PC-9 (cell line): ENCODE measurements at regions of chr4 and their contacts with region 1.

Region 1: DNA sequence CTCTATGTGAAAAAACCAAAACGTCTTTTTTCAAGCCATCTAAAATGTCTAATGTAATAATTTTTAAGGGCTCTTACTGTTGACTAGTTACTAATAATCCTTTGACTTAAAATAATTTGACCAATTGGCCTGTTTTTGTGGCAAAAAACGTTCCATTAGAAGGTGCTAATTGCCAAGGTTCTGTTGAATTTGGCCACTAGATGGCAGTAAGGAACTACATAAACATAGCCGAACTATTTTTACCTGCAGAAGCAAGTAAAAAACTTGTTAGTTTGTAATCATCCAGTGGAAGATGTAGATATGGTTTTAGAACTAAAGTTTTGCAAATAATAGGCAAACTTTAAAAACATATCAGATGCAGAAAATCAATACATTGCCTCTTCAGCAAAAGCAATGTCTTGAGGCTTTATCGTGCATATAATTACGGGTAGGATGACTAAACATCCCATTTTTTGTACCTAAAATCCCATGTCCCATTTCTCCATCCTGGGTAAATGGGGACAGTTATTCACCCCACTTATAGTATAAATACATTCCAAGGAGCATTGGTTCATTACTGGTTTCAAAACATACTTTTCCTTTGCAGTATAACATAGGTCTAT is 57.6 kb downstream of the PROM1 start:
- DNase-seq: peak in 1 of 2 experiments; percentile 6
- H3K4me3 ChIP-seq: no peak overlapping the region
- H3K27ac ChIP-seq: no peak overlapping the region
- H3K4me1 ChIP-seq: no peaks in the 10 kb centered on the region
- H3K27me3 ChIP-seq: no peaks in the 10 kb centered on the region
- CTCF ChIP-seq: peak; percentile 84

Region 2: DNA sequence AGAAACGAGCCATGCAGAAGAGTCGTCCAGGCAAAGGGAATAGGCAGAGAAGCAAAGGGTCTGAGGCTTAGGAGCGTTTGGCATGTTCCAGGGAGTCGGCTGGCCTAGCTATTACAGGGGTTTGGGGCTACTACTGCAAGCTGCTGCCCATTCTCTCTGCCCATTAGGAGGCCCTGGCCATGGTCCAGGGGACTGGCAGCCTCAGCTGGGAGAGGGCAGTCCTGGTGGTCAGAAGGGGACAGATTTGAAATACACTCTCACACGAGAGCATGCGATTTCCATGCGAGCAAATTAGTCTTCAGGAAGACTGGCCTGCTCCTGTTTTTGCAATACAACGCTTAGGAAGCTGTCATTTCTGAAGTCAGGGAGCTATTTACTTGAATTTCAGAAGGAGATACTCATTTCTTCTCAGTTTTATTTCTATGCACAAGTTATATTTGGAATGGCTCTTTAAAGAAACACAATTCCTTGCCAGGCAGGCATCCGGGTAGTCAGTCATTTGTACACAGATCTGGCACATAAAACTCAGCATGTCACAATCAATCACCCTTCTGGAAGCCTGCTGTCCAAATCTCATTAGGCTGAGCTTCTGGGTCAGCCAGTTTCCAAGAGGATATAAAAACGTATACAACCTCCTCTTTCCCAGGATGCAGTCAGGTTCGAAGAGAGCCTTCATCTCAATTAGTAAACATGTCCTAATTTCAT is 30.6 kb after region 1 on chr4:
- CTCF ChIA-PET with region 1: no interaction called
- POLR2A ChIA-PET with region 1: no interaction called
- intact Hi-C with region 1: no loop called
- DNase-seq: no peak
- H3K4me3 ChIP-seq: no peak overlapping the region
- H3K27ac ChIP-seq: no peak overlapping the region
- H3K4me1 ChIP-seq: no peaks in the 10 kb centered on the region
- H3K27me3 ChIP-seq: no peaks in the 10 kb centered on the region
- CTCF ChIP-seq: no peak

Region 3: GRCh38 chr4:16264798-16265197 is 238.5 kb after region 1 on chr4:
- CTCF ChIA-PET with region 1: no interaction called
- POLR2A ChIA-PET with region 1: no interaction called
- intact Hi-C with region 1: loop called (anchors 1 kb)
- DNase-seq: no peak
- H3K4me3 ChIP-seq: no peak overlapping the region
- H3K27ac ChIP-seq: no peak overlapping the region
- H3K4me1 ChIP-seq: no peaks in the 10 kb centered on the region
- H3K27me3 ChIP-seq: no peaks in the 10 kb centered on the region
- CTCF ChIP-seq: peak; percentile 53

Region 4: GRCh38 chr4:16344853-16345252 is 318.6 kb after region 1 on chr4:
- CTCF ChIA-PET with region 1: no interaction called
- POLR2A ChIA-PET with region 1: no interaction called
- intact Hi-C with region 1: no loop called
- DNase-seq: no peak
- H3K4me3 ChIP-seq: no peak overlapping the region
- H3K27ac ChIP-seq: no peak overlapping the region
- H3K4me1 ChIP-seq: no peaks in the 10 kb centered on the region
- H3K27me3 ChIP-seq: no peaks in the 10 kb centered on the region
- CTCF ChIP-seq: no peak

Region 5: GRCh38 chr4:16443504-16444088 is 417.3 kb after region 1 on chr4:
- CTCF ChIA-PET with region 1: no interaction called
- POLR2A ChIA-PET with region 1: no interaction called
- intact Hi-C with region 1: loop called (anchors 10 kb)
- DNase-seq: no peak
- H3K4me3 ChIP-seq: no peak overlapping the region
- H3K27ac ChIP-seq: no peak overlapping the region
- H3K4me1 ChIP-seq: no peaks in the 10 kb centered on the region
- H3K27me3 ChIP-seq: no peaks in the 10 kb centered on the region
- CTCF ChIP-seq: peak; percentile 65